ENCODE measurements at regions of chr12 and their contacts with region 1.

Region 1: GRCh38 chr12:108562348-108563135 is at the start of gene ISCU:
- DNase-seq: peak; percentile 90 to 98
- H3K4me3 ChIP-seq: peak within 1 kb of the TSS; percentile 86
- H3K4me1 ChIP-seq: peaks cover 8% of the 10 kb centered on the region
- H3K27me3 ChIP-seq: no peaks in the 10 kb centered on the region

Region 2: GRCh38 chr12:108618079-108618952 is 55.8 kb after region 1 on chr12:
- in situ Hi-C with region 1: loop called (anchors 5 kb)
- DNase-seq: peak; percentile 70 to 86
- H3K4me3 ChIP-seq: no peak overlapping the region
- H3K4me1 ChIP-seq: no peaks in the 10 kb centered on the region
- H3K27me3 ChIP-seq: no peaks in the 10 kb centered on the region

Region 3: GRCh38 chr12:109093022-109093918 is 530.7 kb after region 1 on chr12 and contains the start of gene ALKBH2:
- in situ Hi-C with region 1: loop called (anchors 10 kb)
- DNase-seq: peak; percentile 83 to 95
- H3K4me3 ChIP-seq: peak within 1 kb of the TSS; percentile 41
- H3K4me1 ChIP-seq: peaks cover 22% of the 10 kb centered on the region
- H3K27me3 ChIP-seq: no peaks in the 10 kb centered on the region

Measured in HAP-1 (cell line).